CD4-positive, alpha-beta T cell (primary cell): ENCODE measurements at regions of chr19 and their contacts with region 1.

Region 1: GRCh38 chr19:21202865-21203494 is 61.1 kb downstream of the ZNF431 start:
- DNase-seq: peak in 6 of 14 experiments; percentile 15 to 74 (median 40)
- ATAC-seq: no peak
- H3K4me3 ChIP-seq: no peak overlapping the region
- H3K4me3 Mint-ChIP-seq: no peak overlapping the region
- H3K27ac ChIP-seq: no peak overlapping the region
- H3K27ac Mint-ChIP-seq: no peak overlapping the region
- H3K4me1 ChIP-seq: no peaks in the 10 kb centered on the region
- H3K4me1 Mint-ChIP-seq: no peaks in the 10 kb centered on the region
- H3K27me3 ChIP-seq: no peaks in the 10 kb centered on the region
- H3K27me3 Mint-ChIP-seq: peaks cover 5% of the 10 kb centered on the region
- CTCF ChIP-seq: peak; percentile 75

Region 2: DNA sequence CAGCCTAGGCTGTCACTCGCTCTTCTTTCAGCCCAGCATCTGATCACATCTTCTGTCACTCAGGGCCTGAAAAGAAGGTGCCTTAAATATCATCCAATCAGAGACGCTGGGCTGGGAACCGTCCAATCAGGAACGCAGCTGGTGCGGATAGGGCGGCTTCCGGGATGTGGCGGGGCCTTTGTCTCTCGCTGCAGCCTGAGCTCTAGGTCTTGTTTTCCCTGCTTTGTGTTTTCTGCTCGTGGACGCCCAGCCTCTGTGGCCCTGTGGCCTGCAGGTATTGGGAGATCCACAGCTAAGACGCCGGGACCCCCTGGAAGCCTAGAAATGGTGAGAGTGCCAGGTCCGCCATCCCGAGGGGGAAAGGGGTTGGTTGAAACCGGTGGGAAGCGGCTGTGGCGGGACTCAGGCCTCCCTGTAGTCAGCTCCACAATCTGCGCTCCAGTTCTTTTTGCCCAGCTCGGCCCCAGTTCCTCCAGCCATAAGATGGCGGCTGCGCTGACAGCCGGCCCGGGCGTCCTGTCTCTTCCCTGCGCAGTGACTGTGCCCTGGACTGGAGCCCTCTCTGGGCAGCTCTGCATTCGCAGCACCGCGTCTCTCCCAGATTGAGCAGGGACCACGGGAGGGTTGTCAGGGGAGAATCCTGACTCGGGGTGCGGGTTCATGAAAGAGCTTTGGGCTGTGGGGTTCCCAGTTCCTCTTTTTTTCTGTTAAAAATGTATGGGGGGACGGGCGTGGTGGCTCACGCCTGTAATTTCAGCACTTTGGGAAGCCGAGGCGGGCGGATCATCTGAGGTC is 279.7 kb before region 1 on chr19 and contains the start of gene ZNF85:
- CTCF ChIA-PET with region 1: no interaction called
- POLR2A ChIA-PET with region 1: no interaction called
- intact Hi-C with region 1: no loop called
- DNase-seq: peak; percentile 79 to 97 (median 86)
- ATAC-seq: peak; percentile 99
- H3K4me3 ChIP-seq: peak within 1 kb of the TSS; percentile 83
- H3K4me3 Mint-ChIP-seq: peak within 1 kb of the TSS; percentile 96
- H3K27ac ChIP-seq: peak within 1 kb of the TSS; percentile 44 to 75
- H3K27ac Mint-ChIP-seq: peak within 1 kb of the TSS; percentile 89
- H3K4me1 ChIP-seq: peaks cover 12% of the 10 kb centered on the region
- H3K4me1 Mint-ChIP-seq: peaks cover 26% of the 10 kb centered on the region
- H3K27me3 ChIP-seq: no peaks in the 10 kb centered on the region
- H3K27me3 Mint-ChIP-seq: no peaks in the 10 kb centered on the region
- CTCF ChIP-seq: no peak
- total RNA-seq, gene ZNF85: 3.4 to 4.7 TPM

Region 3: DNA sequence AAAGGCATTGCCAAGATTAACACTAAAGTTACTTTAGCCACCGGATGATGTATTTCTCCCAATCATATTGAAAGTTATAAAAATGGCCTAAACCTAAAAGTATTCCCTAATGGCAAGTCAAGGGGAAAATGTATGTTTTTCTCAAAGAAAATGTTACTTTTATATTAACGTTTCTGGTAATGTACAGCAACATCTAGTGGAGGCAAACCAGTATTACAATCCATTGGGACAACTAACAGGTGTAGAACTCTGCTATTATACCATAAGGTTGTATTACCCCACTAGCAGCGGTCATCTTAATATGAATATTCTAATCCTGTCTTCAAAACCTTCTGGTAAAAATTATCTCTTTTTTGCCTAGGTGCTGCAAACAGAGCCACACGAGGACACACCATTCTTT is 495.2 kb after region 1 on chr19:
- CTCF ChIA-PET with region 1: no interaction called
- POLR2A ChIA-PET with region 1: no interaction called
- intact Hi-C with region 1: loop called (anchors 1 to 2 kb)
- DNase-seq: peak in 4 of 14 experiments; percentile 5 to 61 (median 42)
- ATAC-seq: peak; percentile 66
- H3K4me3 ChIP-seq: no peak overlapping the region
- H3K4me3 Mint-ChIP-seq: no peak overlapping the region
- H3K27ac ChIP-seq: no peak overlapping the region
- H3K27ac Mint-ChIP-seq: no peak overlapping the region
- H3K4me1 ChIP-seq: no peaks in the 10 kb centered on the region
- H3K4me1 Mint-ChIP-seq: no peaks in the 10 kb centered on the region
- H3K27me3 ChIP-seq: no peaks in the 10 kb centered on the region
- H3K27me3 Mint-ChIP-seq: no peaks in the 10 kb centered on the region
- CTCF ChIP-seq: peak; percentile 76

Region 4: GRCh38 chr19:21883516-21883915 is 680.5 kb after region 1 on chr19:
- CTCF ChIA-PET with region 1: no interaction called
- POLR2A ChIA-PET with region 1: no interaction called
- intact Hi-C with region 1: loop called in 1 of 2 experiments (anchors 5 kb)
- DNase-seq: no peak
- ATAC-seq: no peak
- H3K4me3 ChIP-seq: no peak overlapping the region
- H3K4me3 Mint-ChIP-seq: no peak overlapping the region
- H3K27ac ChIP-seq: no peak overlapping the region
- H3K27ac Mint-ChIP-seq: no peak overlapping the region
- H3K4me1 ChIP-seq: no peaks in the 10 kb centered on the region
- H3K4me1 Mint-ChIP-seq: no peaks in the 10 kb centered on the region
- H3K27me3 ChIP-seq: no peaks in the 10 kb centered on the region
- H3K27me3 Mint-ChIP-seq: peaks cover 5% of the 10 kb centered on the region
- CTCF ChIP-seq: no peak